ENCODE measurements at regions of chr16 and their contacts with region 1.

Region 1: GRCh38 chr16:72787514-72788268 is 260.2 kb downstream of the ZFHX3 start:
- DNase-seq: peak; percentile 55
- H3K4me3 Mint-ChIP-seq: peak overlapping the region; percentile 84
- H3K27ac Mint-ChIP-seq: peak overlapping the region; percentile 68
- H3K4me1 Mint-ChIP-seq: peaks cover 23% of the 10 kb centered on the region
- H3K27me3 Mint-ChIP-seq: peaks cover 34% of the 10 kb centered on the region

Region 2: DNA sequence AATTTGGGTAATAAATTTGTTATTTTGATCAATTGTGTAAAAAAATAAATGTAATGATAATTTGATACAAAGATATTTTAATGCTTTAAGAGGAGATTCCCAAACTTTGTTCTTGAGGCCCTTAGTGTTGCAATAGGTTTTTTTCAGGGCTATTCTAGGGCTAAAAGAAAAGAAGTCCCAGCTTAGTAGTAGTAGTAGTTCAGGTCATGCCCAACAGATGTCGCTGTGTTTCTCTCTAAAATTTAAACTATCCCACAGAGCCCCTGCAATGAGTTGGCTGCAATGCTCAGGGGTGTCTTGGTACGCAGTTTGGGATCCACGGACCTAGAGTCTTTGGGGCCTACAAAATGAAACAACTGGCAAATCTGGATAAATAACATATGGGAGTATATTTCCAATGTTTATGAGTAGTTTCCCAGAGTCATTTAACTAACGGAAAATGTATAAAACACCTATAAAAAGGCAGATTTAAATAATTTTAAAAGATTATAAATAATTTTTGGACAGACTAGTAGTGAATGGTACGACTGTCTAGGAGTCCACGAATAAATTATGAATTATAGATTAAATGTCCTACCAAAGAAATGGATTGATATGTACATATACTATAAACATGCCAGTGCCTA is 387.3 kb before region 1 on chr16:
- intact Hi-C with region 1: loop called (anchors 10 kb)
- DNase-seq: peak; percentile 2
- H3K4me3 Mint-ChIP-seq: no peak overlapping the region
- H3K27ac Mint-ChIP-seq: no peak overlapping the region
- H3K4me1 Mint-ChIP-seq: no peaks in the 10 kb centered on the region
- H3K27me3 Mint-ChIP-seq: no peaks in the 10 kb centered on the region

Region 3: GRCh38 chr16:72474501-72475123 is 313.1 kb before region 1 on chr16:
- intact Hi-C with region 1: loop called (anchors 10 kb)
- DNase-seq: no peak
- H3K4me3 Mint-ChIP-seq: no peak overlapping the region
- H3K27ac Mint-ChIP-seq: peak overlapping the region; percentile 46
- H3K4me1 Mint-ChIP-seq: peaks cover 20% of the 10 kb centered on the region
- H3K27me3 Mint-ChIP-seq: no peaks in the 10 kb centered on the region

Region 4: DNA sequence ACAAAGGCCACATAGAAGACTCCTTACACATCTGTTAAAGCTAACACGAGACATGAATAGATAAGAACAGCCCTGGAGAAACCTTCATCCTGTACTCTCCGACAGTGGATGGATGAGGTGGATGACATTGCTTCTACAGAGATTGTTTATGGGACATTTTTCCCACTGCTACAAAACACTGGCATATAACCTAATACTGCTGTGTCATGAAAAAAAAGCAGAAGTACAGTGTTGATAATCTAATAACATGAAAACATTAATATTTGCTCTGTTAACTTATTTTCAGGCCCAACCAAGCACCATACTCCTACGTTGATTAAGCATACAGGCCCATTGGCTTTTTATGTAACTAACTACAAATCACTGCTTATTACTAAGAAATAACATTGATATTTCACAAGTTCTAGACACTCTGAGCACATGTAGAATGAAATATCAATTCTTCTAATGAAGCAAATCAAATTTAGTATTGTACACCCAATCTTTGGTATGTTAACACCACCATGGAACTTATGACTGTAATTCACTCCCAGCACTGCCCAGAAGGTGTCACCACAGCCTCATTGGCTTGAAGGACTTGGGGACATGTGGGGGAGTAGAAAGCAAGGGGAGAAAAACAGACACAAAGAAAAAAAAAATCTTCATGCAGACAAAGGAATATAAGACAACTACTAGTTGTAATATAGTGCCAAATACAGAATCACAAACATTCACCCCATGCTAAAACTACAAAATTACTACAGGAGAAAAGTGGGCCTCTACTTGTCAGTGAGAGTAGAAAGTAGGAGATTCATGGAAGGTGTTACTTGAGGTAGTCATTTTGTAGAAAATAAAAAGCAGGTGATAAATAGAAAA is 285.7 kb before region 1 on chr16:
- intact Hi-C with region 1: loop called (anchors 10 kb)
- DNase-seq: no peak
- H3K4me3 Mint-ChIP-seq: no peak overlapping the region
- H3K27ac Mint-ChIP-seq: no peak overlapping the region
- H3K4me1 Mint-ChIP-seq: no peaks in the 10 kb centered on the region
- H3K27me3 Mint-ChIP-seq: no peaks in the 10 kb centered on the region

Region 5: GRCh38 chr16:72604375-72604774 is 183.3 kb before region 1 on chr16:
- intact Hi-C with region 1: no loop called
- DNase-seq: no peak
- H3K4me3 Mint-ChIP-seq: no peak overlapping the region
- H3K27ac Mint-ChIP-seq: no peak overlapping the region
- H3K4me1 Mint-ChIP-seq: no peaks in the 10 kb centered on the region
- H3K27me3 Mint-ChIP-seq: no peaks in the 10 kb centered on the region

Region 6: GRCh38 chr16:72769876-72770275 is 17.8 kb before region 1 on chr16:
- intact Hi-C with region 1: no loop called
- DNase-seq: no peak
- H3K4me3 Mint-ChIP-seq: no peak overlapping the region
- H3K27ac Mint-ChIP-seq: no peak overlapping the region
- H3K4me1 Mint-ChIP-seq: no peaks in the 10 kb centered on the region
- H3K27me3 Mint-ChIP-seq: no peaks in the 10 kb centered on the region

Region 7: GRCh38 chr16:73047518-73048291 is 260.0 kb after region 1 on chr16 and contains the start of gene ZFHX3:
- intact Hi-C with region 1: loop called (anchors 10 kb)
- DNase-seq: peak; percentile 12
- H3K4me3 Mint-ChIP-seq: peak within 1 kb of the TSS; percentile 75
- H3K27ac Mint-ChIP-seq: no peak within 1 kb of the TSS
- H3K4me1 Mint-ChIP-seq: no peaks in the 10 kb centered on the region
- H3K27me3 Mint-ChIP-seq: peaks cover 39% of the 10 kb centered on the region
- total RNA-seq, gene ZFHX3: 0.34 TPM in 2 replicates